ENCODE measurements at regions of chr11 and their contacts with region 1.

Region 1: GRCh38 chr11:61332797-61333549 is at the starts of genes DDB1 and TKFC:
- DNase-seq: peak; percentile 98
- H3K4me3 Mint-ChIP-seq: peak within 1 kb of the TSS; percentile 96
- H3K27ac Mint-ChIP-seq: peak within 1 kb of the TSS; percentile 94
- H3K4me1 Mint-ChIP-seq: peaks cover 73% of the 10 kb centered on the region
- H3K27me3 Mint-ChIP-seq: no peaks in the 10 kb centered on the region
- total RNA-seq, gene DDB1: 227 to 236 TPM
- total RNA-seq, gene TKFC: 146 to 154 TPM

Region 2: GRCh38 chr11:60913793-60914632 is 419.0 kb before region 1 on chr11 and contains the start of gene TMEM109:
- CTCF ChIA-PET with region 1: no interaction called
- intact Hi-C with region 1: loop called (anchors 2 kb)
- DNase-seq: peak; percentile 89
- H3K4me3 Mint-ChIP-seq: peak within 1 kb of the TSS; percentile 94
- H3K27ac Mint-ChIP-seq: peak within 1 kb of the TSS; percentile 95
- H3K4me1 Mint-ChIP-seq: peaks cover 62% of the 10 kb centered on the region
- H3K27me3 Mint-ChIP-seq: no peaks in the 10 kb centered on the region
- total RNA-seq, gene TMEM109: 94.0 to 103 TPM

Region 3: GRCh38 chr11:61254403-61255025 is 78.5 kb before region 1 on chr11:
- CTCF ChIA-PET with region 1: interaction called, 5 read pairs
- intact Hi-C with region 1: loop called (anchors 1 kb)
- DNase-seq: peak; percentile 80
- H3K4me3 Mint-ChIP-seq: no peak overlapping the region
- H3K27ac Mint-ChIP-seq: no peak overlapping the region
- H3K4me1 Mint-ChIP-seq: no peaks in the 10 kb centered on the region
- H3K27me3 Mint-ChIP-seq: no peaks in the 10 kb centered on the region

Region 4: DNA sequence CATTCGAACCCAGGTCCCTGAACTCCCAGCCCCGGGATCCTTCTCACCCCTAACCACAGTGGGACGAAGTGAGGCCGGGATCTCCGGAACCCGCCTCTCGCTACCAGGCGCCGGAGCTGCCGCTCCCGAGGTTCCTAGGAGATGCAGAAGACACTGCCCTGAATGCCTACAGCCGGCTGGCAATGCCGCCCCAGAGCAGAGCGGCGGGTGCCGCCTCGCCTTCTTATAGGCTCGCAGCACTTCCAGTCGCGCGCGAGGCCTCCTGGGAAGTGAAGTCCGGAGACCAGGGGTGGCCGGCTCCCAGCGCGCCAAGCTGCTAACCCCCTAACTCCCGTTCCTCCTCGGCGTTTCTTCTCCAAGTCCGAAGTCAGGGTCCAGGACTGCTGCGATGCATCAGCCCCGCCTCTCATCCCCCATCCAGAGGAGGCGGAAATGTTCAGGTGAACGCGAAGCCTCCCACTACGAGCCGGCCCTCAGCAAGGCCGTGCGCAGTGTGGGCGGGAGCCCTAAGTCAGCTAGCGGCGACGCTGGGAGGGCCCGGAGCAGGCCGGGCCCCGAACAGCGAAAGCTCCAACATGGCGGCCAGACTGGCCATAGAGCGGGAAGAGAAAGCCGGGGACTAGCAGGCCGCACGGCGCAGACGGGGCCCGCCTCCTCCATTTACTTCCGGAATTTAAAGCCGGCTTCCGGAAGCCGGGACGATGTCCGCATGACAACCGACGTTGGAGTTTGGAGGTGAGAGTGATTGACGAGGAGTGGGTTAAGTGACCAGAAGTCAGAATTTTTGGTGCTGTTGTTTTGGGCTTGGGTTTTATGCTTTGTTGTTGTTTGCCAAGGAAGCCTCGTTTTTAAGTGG is 28.9 kb after region 1 on chr11 and contains the starts of genes CYB561A3 and TMEM138:
- CTCF ChIA-PET with region 1: interaction called, 60 read pairs
- intact Hi-C with region 1: loop called (anchors 1 kb)
- DNase-seq: peak; percentile 94
- H3K4me3 Mint-ChIP-seq: peak within 1 kb of the TSS; percentile 100
- H3K27ac Mint-ChIP-seq: peak within 1 kb of the TSS; percentile 96
- H3K4me1 Mint-ChIP-seq: peaks cover 42% of the 10 kb centered on the region
- H3K27me3 Mint-ChIP-seq: no peaks in the 10 kb centered on the region
- total RNA-seq, gene CYB561A3: 31.7 to 31.8 TPM
- total RNA-seq, gene TMEM138: 35.6 to 41.4 TPM

Region 5: DNA sequence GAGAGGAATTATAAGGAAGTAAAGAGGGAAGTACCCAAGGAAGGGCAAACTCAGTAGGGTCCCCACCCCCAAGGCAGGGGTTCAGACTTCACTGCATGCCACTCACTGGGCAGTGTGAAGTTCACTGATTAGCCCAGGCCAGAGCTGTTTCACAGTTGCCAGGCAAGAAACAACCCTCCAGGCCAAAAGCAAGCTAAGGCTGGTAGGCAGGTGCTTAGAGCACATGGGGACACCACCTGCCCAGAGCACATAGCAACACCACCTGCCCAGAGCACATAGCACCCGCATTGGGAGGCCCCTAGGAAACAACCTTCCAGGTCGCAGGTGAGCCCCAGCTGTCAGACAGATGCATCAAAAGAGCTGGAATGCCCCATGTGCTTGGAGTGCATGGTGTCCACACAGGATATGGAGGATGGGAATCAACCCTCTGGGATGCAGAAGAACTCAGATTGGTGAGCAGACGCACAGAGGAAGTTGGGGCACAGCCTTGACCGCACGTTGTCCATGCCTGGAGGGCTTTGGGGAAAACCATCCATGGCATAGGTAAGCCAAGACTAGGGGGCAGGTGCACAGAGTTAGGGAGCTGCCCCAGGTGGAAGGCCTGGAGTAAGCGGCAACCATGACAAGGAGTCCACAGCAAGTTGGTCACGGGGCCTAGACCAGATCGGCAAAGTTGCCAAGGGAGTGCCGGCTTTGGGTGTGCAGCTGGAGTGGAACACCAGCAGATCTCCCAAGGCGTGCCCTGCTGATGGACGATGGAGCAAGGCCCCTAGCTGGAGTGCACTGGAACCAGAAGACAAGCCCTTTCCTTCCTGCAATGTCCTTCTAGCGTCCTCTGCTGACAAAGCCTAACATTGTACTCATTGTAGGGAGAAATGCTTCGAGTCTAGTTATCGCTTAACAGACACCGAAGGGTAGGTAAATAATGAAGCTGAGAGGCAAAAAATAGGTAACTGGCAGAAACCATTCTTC is 51.6 kb after region 1 on chr11:
- CTCF ChIA-PET with region 1: interaction called, 243 read pairs
- intact Hi-C with region 1: loop called (anchors 1 kb)
- DNase-seq: no peak
- H3K4me3 Mint-ChIP-seq: no peak overlapping the region
- H3K27ac Mint-ChIP-seq: no peak overlapping the region
- H3K4me1 Mint-ChIP-seq: peaks cover 3% of the 10 kb centered on the region
- H3K27me3 Mint-ChIP-seq: no peaks in the 10 kb centered on the region

Region 6: GRCh38 chr11:61516675-61517572 is 184.0 kb after region 1 on chr11:
- CTCF ChIA-PET with region 1: interaction called, 7 read pairs
- intact Hi-C with region 1: loop called (anchors 1 kb)
- DNase-seq: peak; percentile 53
- H3K4me3 Mint-ChIP-seq: peak overlapping the region; percentile 32
- H3K27ac Mint-ChIP-seq: no peak overlapping the region
- H3K4me1 Mint-ChIP-seq: peaks cover 7% of the 10 kb centered on the region
- H3K27me3 Mint-ChIP-seq: peaks cover 19% of the 10 kb centered on the region